ENCODE measurements at regions of chr1 and their contacts with region 1.

Region 1: GRCh38 chr1:21077085-21077484 is 99.6 kb downstream of the EIF4G3 start:
- DNase-seq: no peak
- H3K4me3 ChIP-seq: no peak overlapping the region
- H3K27me3 ChIP-seq: no peaks in the 10 kb centered on the region
- CTCF ChIP-seq: no peak

Region 2: DNA sequence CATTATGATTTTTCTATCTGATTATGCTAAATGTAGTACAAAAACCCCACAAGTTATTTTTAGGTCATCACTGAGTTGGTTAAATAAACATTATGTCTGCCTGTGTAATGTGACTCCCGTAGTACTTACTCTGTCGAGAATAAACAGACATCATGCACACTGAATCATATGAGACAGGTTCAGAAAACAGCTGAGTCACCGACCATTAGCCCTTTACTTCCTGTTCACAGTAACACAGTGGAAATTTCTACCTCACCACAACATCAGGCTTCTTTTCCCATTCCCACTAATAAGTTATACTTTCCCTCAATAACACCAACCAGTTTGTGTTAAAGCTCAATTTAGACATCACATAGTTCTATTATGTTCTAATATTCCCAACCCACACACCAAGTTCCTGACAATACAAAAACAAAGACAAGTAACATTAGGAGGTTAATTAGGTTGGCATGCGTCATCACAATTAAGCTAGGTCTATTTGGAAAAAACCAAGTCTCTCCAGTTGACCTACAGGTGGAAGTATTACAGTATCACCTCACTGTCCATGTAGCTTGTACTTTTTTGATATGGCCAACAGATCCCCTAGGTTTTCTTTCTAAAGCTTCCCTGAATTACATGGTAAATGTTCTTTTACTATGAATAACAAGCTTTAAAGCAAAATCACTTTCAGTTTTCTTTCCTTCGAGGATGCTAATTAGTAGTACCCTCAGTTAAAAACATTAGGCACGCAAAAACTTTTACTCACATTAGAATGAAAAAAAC is 54.6 kb before region 1 on chr1:
- CTCF ChIA-PET with region 1: no interaction called
- POLR2A ChIA-PET with region 1: interaction called, 11 read pairs
- DNase-seq: peak; percentile 96
- H3K4me3 ChIP-seq: no peak overlapping the region
- H3K27me3 ChIP-seq: no peaks in the 10 kb centered on the region
- CTCF ChIP-seq: no peak

Region 3: DNA sequence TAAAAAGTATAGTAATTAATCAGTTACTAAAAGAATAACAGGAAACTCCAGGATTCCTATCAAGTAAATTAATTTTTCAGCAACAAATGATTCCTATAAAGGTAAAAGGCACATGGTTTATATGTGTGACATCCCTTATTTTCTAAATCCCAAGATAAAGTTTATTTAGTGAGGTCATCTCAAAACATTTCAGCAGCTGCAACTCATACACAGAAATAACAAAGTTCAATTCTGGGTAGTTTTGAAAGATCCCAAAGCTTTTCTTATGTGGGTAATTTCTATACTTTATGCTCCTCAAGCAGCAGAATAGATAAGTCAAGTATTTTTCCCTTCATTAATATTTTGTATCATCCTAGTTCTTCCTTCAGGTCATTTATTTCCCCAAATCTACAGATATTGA is 18.1 kb before region 1 on chr1:
- CTCF ChIA-PET with region 1: no interaction called
- POLR2A ChIA-PET with region 1: no interaction called
- DNase-seq: no peak
- H3K4me3 ChIP-seq: no peak overlapping the region
- H3K27me3 ChIP-seq: no peaks in the 10 kb centered on the region
- CTCF ChIP-seq: no peak

Region 4: GRCh38 chr1:21189906-21190500 is 112.9 kb after region 1 on chr1:
- CTCF ChIA-PET with region 1: interaction called, 11 read pairs
- POLR2A ChIA-PET with region 1: interaction called, 17 read pairs
- DNase-seq: no peak
- H3K4me3 ChIP-seq: no peak overlapping the region
- H3K27me3 ChIP-seq: no peaks in the 10 kb centered on the region
- CTCF ChIP-seq: no peak